Activated CD4-positive, alpha-beta T cell treated with anti-CD3 and anti-CD28 coated beads for 36 hours (primary cell): ENCODE measurements at regions of chr10 and their contacts with region 1.

Region 1: DNA sequence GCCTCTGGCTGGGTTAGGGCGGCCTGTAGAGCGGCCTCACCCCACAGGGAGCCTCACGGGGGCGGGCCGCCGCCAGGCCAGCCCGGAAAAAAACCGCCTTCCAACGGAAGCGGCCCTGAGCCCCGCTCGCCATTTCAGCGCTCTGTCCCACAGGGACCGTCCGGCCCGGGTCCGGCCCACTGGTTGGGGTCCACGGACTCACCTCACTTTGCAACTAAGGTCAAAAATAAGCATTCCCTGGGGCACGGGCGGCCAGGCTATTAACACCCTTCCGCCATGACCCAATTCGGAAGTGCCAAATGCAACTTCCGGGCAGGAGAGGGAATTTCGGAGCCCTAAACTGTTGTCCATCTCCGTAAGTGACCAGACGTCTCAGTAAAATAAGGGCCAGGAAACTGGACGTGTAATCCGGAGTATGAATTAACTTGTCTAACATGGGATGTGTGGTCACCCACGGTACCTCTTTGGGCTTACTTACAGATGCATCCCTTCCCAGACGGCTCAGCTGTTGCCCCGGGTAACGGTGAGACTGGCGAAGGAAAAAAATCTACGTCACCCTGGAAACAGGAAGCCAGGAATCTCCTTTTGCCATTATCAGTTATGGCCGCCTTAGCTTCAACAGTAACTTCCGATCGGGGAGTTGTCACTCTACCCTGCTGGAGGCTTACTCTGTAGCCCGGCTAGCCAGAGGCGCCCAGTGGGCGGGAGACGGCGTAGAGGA is at the start of gene BBIP1:
- DNase-seq: no peak
- ATAC-seq: peak; percentile 93
- H3K4me3 Mint-ChIP-seq: peak within 1 kb of the TSS; percentile 96
- H3K27ac Mint-ChIP-seq: peak within 1 kb of the TSS; percentile 98
- H3K4me1 Mint-ChIP-seq: peaks cover 41% of the 10 kb centered on the region
- H3K27me3 Mint-ChIP-seq: no peaks in the 10 kb centered on the region
- total RNA-seq, gene BBIP1: 34.3 to 48.8 TPM

Region 2: DNA sequence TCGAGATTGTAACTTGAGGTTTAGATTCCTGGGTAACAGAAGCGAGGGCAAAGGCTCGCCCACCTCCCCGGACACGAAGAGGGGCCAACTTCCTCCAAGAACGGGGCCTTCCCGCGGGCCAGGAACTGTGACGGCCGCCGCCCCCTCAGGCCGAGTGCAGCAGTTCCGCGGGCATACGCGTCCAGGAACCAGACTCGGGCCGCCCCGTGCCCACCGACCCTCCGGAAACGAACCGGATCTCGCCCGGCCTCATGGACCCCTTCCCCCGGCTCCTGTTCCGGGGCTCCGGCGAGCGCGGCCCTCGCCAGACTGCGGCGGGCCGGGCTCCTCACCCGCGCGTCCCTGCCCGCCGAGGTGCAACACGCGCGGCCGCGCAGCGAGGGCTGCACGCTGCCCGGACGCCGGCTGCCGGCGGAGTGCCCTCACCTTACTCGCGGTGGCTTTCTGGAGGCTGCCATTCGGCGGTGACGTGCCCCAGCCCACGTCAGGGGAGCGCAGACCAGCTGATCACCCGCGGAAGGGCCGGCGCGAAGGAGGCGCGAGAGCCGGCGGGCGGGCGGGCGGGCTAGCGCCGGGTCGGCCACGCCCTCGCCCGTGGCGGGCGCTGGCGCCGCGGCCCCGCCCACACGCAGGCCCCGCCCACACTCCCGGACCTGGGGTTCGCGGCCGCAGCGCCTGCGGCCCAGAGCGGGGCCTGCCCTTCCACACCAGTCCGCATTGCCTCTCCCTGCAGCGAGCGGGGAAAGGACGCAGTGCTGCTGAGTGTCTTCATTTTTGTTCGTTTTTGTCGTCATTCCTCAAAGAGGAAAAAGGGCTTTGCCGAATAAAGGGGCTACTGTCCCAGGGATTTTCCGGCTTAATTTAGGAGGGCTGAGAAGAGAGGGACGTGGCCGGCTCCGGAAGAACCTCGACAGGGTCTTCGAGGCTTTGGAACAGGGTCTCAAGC is 995.6 kb before region 1 on chr10 and contains the start of gene XPNPEP1:
- CTCF ChIA-PET with region 1: no interaction called
- POLR2A ChIA-PET with region 1: no interaction called
- intact Hi-C with region 1: loop called in 1 of 2 experiments (anchors 5 kb)
- DNase-seq: peak; percentile 90
- ATAC-seq: peak; percentile 90
- H3K4me3 Mint-ChIP-seq: peak within 1 kb of the TSS; percentile 94
- H3K27ac Mint-ChIP-seq: peak within 1 kb of the TSS; percentile 94
- H3K4me1 Mint-ChIP-seq: peaks cover 48% of the 10 kb centered on the region
- H3K27me3 Mint-ChIP-seq: no peaks in the 10 kb centered on the region
- total RNA-seq, gene XPNPEP1: 85.4 to 91.2 TPM

Region 3: DNA sequence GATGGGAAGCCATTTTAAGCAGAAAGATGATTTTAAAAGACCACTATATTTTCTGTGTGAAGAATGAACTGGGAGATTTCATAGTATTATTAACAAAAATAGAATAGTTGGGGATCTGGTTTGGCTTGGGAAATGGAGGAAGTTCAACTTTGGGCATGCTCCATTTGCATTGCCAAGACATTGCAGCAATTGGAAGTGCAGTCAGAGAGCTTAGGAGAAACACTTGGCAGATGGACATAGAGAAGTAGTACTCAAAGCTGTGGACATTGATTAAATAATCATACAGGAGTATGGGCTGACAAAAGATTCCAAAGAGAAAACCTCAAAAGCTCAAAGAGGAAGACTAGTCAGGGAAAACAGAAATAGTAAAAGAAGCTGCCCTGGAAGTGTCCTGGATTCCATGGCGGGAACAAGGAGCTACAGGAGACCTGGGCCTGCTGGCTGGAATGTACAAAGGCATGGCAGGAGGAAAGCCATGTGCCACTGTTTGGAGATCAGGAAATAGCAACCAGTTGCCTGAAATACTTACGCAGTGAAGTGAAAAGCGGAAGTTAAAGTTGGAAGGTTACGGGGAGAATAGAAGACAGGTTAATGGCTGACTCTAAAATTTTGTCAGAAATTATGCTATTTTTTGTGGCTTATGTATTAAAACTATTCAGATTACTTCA is 805.0 kb before region 1 on chr10:
- CTCF ChIA-PET with region 1: no interaction called
- POLR2A ChIA-PET with region 1: no interaction called
- intact Hi-C with region 1: no loop called
- DNase-seq: no peak
- ATAC-seq: no peak
- H3K4me3 Mint-ChIP-seq: no peak overlapping the region
- H3K27ac Mint-ChIP-seq: peak overlapping the region; percentile 7
- H3K4me1 Mint-ChIP-seq: peaks cover 10% of the 10 kb centered on the region
- H3K27me3 Mint-ChIP-seq: no peaks in the 10 kb centered on the region

Region 4: DNA sequence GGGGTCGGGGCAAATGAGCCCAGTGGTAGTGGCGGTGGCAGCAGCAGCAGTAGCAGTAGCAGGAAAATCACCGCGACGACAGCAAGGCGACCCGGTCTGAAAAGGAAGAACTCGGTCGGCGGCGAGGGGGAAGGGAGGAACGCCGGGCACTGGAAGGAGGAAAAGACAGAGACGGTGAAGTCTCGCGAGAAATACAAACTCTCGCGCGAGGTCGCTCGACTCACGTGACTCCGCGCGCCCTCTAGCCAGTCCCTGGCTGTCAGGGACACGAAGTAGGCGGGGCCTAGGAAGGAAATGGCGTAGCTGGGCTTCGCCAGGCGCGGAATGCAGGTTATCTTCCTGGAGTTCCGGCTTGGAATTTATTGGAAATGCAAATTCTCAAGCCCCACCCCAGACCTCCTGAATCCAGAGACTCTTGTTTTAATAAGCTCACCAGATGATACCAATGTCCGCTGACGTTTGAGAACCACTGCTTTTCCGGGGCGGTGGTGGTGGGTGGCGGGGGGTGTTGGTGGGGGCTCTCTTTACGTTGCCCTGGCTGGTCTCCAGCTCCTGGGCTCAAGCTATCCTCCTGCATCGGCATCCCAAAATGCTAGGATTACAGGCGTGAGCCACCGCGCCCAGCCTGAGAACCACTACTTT is 613.9 kb before region 1 on chr10 and contains the start of gene SMNDC1:
- CTCF ChIA-PET with region 1: no interaction called
- POLR2A ChIA-PET with region 1: no interaction called
- intact Hi-C with region 1: loop called (anchors 1 to 10 kb)
- DNase-seq: peak; percentile 98
- ATAC-seq: peak; percentile 93
- H3K4me3 Mint-ChIP-seq: peak within 1 kb of the TSS; percentile 95
- H3K27ac Mint-ChIP-seq: peak within 1 kb of the TSS; percentile 98
- H3K4me1 Mint-ChIP-seq: peaks cover 42% of the 10 kb centered on the region
- H3K27me3 Mint-ChIP-seq: no peaks in the 10 kb centered on the region
- total RNA-seq, gene SMNDC1: 44.2 to 56.7 TPM

Region 5: GRCh38 chr10:110567201-110568054 is 351.4 kb before region 1 on chr10 and contains the start of gene SMC3:
- CTCF ChIA-PET with region 1: no interaction called
- POLR2A ChIA-PET with region 1: no interaction called
- intact Hi-C with region 1: loop called in 1 of 2 experiments (anchors 1 kb)
- DNase-seq: peak; percentile 95
- ATAC-seq: peak; percentile 84
- H3K4me3 Mint-ChIP-seq: peak within 1 kb of the TSS; percentile 93
- H3K27ac Mint-ChIP-seq: peak within 1 kb of the TSS; percentile 99
- H3K4me1 Mint-ChIP-seq: peaks cover 35% of the 10 kb centered on the region
- H3K27me3 Mint-ChIP-seq: peaks cover 13% of the 10 kb centered on the region
- total RNA-seq, gene SMC3: 76.8 to 83.5 TPM

Region 6: DNA sequence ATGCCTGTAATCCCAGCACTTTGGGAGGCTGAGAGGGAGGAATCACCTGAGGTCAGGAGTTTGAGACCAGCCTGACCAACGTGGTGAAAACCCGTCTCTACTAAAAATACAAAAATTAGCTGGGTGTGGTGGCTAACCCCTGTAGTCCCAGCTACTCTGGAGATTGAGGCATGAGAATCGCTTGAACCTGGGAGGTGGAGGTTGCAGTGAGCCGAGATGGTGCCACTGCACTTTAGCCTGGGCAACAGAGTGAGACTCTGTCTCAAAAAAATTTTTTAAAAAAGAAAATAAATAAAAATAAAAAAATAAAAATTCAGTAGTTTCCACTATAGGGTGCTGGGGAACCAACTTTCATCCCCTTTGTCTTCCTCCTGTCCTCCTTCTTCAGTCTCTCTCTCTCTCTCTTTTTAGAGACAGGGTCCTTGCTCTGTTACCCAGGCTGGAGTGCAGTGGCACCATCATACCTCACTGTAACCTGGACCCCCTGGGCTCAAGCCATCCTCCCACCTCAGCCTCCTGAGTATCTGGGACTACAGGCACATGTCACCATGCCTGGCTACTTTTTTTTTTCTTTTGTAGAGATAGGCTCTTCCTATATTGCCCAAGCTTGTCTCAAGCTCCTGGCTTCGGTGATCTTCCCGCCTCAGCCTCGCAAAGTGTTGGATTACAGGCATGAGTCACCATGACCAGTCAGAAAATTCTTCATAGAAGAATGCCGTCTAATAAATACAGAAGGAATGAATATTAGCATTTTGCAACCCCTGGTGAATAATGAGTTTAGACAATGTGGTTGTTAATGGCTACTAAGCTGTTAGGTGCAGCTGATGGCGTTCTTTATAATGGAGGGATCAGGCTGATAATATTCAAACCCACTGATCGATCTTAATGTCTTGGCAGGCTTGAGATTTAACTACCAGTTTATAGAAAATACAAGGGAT is 254.1 kb before region 1 on chr10:
- CTCF ChIA-PET with region 1: no interaction called
- POLR2A ChIA-PET with region 1: no interaction called
- intact Hi-C with region 1: no loop called
- DNase-seq: no peak
- ATAC-seq: no peak
- H3K4me3 Mint-ChIP-seq: no peak overlapping the region
- H3K27ac Mint-ChIP-seq: no peak overlapping the region
- H3K4me1 Mint-ChIP-seq: peaks cover 5% of the 10 kb centered on the region
- H3K27me3 Mint-ChIP-seq: no peaks in the 10 kb centered on the region

Region 7: DNA sequence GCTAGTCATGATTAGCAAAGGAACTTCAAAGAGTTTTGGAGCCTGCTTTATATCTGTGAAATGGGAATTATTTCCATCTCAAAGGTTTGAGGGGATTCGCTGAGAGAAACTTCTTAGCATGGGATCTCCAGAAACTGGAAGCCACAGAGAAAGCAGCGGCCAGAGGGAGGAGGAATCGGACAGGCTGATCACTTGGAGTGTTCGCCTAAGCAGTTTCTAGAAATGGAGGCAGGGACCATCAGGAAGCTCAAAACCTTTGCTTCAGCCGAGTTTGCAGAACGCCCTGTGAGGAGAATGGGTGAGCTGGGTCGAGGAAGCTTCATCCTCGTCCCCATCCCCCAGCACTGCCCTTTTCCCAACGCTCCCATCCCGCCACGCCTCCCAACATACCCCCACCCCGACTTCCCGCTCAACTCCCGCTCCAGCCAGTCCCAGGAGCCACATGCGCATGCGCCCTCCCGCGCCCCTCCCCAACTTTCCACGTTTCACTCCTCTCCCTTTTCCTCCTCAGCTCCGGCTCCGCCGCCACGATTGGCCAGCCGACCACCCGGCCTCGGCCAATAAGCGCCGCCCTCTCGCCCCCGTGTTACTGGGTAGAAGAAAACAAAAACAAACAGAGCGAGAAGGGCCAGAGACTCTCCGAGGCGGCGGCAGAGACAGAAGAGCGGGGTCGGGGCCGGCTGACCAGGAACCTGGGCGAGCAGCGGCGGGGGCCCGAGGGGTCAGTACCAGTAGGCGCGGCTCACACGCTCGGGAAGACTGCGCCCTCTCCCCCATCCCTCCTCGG is 47.3 kb before region 1 on chr10 and contains the start of gene PDCD4:
- CTCF ChIA-PET with region 1: interaction called, 3 read pairs
- POLR2A ChIA-PET with region 1: interaction called, 7 read pairs
- intact Hi-C with region 1: loop called (anchors 1 to 2 kb)
- DNase-seq: peak; percentile 97
- ATAC-seq: peak; percentile 85
- H3K4me3 Mint-ChIP-seq: peak within 1 kb of the TSS; percentile 87
- H3K27ac Mint-ChIP-seq: peak within 1 kb of the TSS; percentile 95
- H3K4me1 Mint-ChIP-seq: peaks cover 63% of the 10 kb centered on the region
- H3K27me3 Mint-ChIP-seq: no peaks in the 10 kb centered on the region
- total RNA-seq, gene PDCD4: 69.8 to 125 TPM

Region 8: GRCh38 chr10:110959379-110960332 is 40.9 kb after region 1 on chr10:
- CTCF ChIA-PET with region 1: interaction called, 3 read pairs
- POLR2A ChIA-PET with region 1: no interaction called
- intact Hi-C with region 1: loop called in 1 of 2 experiments (anchors 5 kb)
- DNase-seq: no peak
- ATAC-seq: no peak
- H3K4me3 Mint-ChIP-seq: no peak overlapping the region
- H3K27ac Mint-ChIP-seq: no peak overlapping the region
- H3K4me1 Mint-ChIP-seq: peaks cover 34% of the 10 kb centered on the region
- H3K27me3 Mint-ChIP-seq: no peaks in the 10 kb centered on the region